ENCODE measurements at regions of chr2 and their contacts with region 1.

Region 1: GRCh38 chr2:68452168-68452900 is 14.8 kb downstream of the FBXO48 start:
- DNase-seq: no peak
- ATAC-seq: no peak
- H3K4me3 ChIP-seq: no peak overlapping the region
- H3K27ac ChIP-seq: no peak overlapping the region
- H3K4me1 ChIP-seq: no peaks in the 10 kb centered on the region
- H3K27me3 ChIP-seq: no peaks in the 10 kb centered on the region
- CTCF ChIP-seq: no peak
- POLR2A ChIP-seq: no peak

Region 2: DNA sequence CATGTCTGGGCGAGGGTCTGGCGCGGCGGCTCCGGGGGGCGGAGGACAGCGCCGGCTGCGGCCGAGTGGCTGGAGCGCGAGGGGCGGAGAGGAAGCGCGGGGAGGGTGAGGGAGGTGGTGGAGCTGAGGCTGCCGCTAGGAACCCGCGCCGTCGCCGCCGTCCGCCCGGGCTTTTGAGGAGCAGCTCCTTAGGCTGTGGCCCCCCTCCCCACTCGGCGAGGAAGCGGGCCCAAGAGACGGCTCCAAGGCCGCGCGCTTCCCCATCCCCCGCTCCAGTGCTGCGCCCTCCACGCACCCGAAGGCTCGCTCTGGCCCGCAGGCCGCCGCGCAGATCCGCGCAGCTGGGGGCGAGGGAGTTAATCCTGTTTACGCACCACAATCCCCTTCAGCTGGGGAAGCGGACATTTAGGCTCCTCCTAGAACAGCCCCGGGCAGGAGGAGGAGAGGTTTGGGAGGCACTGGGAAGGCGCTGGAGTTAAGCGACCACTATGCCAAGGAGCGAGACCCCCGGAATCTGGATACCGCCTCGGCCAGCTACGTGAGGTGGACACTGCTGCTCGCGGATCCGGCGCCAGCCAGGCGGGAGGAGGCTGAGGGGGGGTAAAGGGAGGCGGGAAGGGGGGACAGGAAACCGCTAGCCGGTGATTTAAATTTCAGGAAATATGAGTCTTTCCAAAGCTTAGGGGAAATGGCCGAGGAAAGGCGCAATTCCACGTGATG is 132.8 kb before region 1 on chr2 and contains the start of gene CNRIP1:
- intact Hi-C with region 1: no loop called
- DNase-seq: peak; percentile 59 to 71 (median 69)
- ATAC-seq: peak; percentile 68 to 83 (median 78)
- H3K4me3 ChIP-seq: peak within 1 kb of the TSS; percentile 47 to 57 (median 48)
- H3K27ac ChIP-seq: peak within 1 kb of the TSS; percentile 75 to 93 (median 76)
- H3K4me1 ChIP-seq: peaks cover 0 to 9% (median 0%) of the 10 kb centered on the region in 4 donors
- H3K27me3 ChIP-seq: peaks cover 0 to 18% of the 10 kb centered on the region in 2 donors
- CTCF ChIP-seq: no peak
- POLR2A ChIP-seq: peak; percentile 38
- total RNA-seq, gene CNRIP1: 1.9 to 4.1 (median 2.6) TPM

Region 3: DNA sequence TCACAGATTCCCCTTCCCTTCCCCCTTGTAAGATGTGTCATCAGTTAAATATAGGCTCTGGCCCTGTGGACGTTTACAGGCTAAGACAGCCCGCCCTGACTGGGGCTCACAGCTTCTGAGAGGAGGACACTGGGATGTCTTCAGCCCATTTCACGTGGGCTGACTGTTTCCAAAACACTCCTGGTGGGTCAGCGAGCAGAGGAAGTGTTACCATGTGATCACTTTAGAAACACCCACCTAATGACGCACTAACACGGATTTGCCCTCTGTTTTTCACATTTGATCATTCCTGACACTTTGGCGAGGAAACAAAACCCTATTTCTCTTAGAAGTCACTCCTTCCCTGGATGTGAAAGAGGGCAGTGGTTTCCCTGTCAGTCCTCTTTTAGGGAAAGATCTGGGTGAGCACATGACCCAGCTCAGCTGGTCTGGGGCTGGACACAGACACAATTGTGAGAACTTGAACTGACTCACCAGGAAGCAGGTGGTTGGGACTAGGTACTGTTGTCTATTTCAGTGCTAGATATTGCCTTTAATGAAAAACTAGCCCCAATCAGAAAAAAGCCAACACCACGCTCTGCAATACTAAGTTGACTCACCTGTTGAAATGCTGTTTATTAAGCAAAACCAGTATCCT is 380.0 kb after region 1 on chr2:
- intact Hi-C with region 1: loop called in 1 of 2 experiments (anchors 10 kb)
- DNase-seq: peak in 2 of 3 donors; percentile 63 to 66
- ATAC-seq: peak; percentile 58 to 74 (median 66)
- H3K4me3 ChIP-seq: no peak overlapping the region
- H3K27ac ChIP-seq: peak overlapping the region; percentile 48 to 65 (median 58)
- H3K4me1 ChIP-seq: peaks cover 0 to 9% (median 2%) of the 10 kb centered on the region in 4 donors
- H3K27me3 ChIP-seq: no peaks in the 10 kb centered on the region
- CTCF ChIP-seq: no peak
- POLR2A ChIP-seq: no peak

Measured in right lobe of liver (tissue), 6 donors.